ENCODE measurements at regions of chr1 and their contacts with region 1.

Region 1: DNA sequence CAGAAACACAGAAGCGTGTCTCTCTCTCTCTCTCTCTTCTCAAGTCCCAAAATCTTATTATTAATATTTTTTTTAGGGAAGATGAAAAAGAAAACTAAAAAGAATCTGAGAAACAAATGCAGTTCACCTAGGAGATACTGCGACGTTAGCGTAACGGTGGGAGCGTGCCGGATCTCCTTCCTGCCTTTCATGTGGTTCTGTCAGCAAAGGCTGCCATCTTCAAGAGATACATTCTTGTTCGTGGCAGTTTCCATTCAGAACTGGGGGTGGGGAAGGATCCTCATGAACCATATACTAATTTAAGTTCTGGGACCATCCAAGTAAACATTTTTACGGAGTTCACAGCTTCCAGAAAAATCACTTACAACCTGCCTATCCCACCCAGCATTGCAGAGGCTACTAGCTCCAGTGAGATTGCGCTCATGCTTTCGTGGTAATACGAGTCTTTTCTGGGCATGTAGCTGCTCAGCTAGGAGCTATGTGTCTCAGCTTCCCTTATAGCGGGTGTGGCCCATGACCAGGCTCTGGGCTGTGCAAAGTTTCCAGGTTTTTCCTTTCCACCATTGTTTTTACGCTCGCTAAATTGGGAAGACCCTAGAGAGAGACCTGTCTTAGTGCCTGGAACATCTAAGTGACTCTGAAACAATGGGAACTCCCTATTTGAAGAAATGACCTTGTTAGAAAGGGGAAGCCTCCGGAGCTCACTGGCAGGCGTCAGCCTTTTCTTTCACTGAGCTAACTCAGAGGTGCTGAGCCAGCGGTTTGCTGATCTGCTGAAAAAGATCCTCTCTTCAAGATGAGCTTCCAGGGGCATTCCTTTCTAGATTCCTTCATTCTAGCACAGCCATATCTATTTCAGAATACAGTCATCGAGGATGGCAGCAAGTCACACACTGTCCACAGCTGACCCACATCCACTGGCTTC is 17.3 kb downstream of the SLAMF1 start:
- DNase-seq: peak; percentile 83
- ATAC-seq: peak; percentile 22
- H3K4me3 Mint-ChIP-seq: peak overlapping the region; percentile 65
- H3K27ac Mint-ChIP-seq: peak overlapping the region; percentile 99
- H3K4me1 Mint-ChIP-seq: peaks cover 97% of the 10 kb centered on the region
- H3K27me3 Mint-ChIP-seq: no peaks in the 10 kb centered on the region

Region 2: GRCh38 chr1:160618763-160619274 is 10.7 kb before region 1 on chr1:
- CTCF ChIA-PET with region 1: interaction called, 22 read pairs
- POLR2A ChIA-PET with region 1: interaction called, 6 read pairs
- intact Hi-C with region 1: no loop called
- DNase-seq: peak; percentile 65
- ATAC-seq: no peak
- H3K4me3 Mint-ChIP-seq: no peak overlapping the region
- H3K27ac Mint-ChIP-seq: peak overlapping the region; percentile 71
- H3K4me1 Mint-ChIP-seq: peaks cover 60% of the 10 kb centered on the region
- H3K27me3 Mint-ChIP-seq: no peaks in the 10 kb centered on the region

Region 3: DNA sequence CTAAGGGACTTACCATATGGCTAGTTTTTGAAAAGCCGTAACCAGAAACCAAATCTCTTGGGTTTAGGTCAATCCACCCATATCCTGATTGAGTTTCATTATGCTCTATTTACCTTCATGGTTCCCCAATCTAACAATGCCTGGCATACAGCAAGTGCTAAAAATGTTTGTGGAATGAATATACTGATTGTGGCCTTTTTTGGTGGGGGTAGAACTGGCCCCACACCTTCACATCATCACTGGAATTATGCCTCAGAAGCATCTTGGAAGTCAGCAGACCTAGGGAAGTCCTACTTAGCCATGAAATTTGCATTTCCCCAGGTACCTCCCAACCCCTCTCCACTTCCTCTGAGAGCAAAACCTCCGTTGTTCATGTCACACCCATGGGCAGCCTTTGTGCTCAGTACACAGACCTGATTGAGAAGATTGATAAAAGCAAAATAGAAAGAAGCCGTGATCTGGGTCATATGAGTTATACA is 35.1 kb after region 1 on chr1:
- CTCF ChIA-PET with region 1: interaction called, 4 read pairs
- POLR2A ChIA-PET with region 1: no interaction called
- intact Hi-C with region 1: loop called in 1 of 2 experiments (anchors 1 kb)
- DNase-seq: peak; percentile 55
- ATAC-seq: peak; percentile 79
- H3K4me3 Mint-ChIP-seq: peak overlapping the region; percentile 40
- H3K27ac Mint-ChIP-seq: peak overlapping the region; percentile 89
- H3K4me1 Mint-ChIP-seq: peaks cover 70% of the 10 kb centered on the region
- H3K27me3 Mint-ChIP-seq: no peaks in the 10 kb centered on the region

Region 4: GRCh38 chr1:160795951-160796383 is 166.4 kb after region 1 on chr1 and contains the start of gene LY9:
- CTCF ChIA-PET with region 1: interaction called, 3 read pairs
- POLR2A ChIA-PET with region 1: interaction called, 5 read pairs
- intact Hi-C with region 1: loop called (anchors 2 to 5 kb)
- DNase-seq: peak; percentile 89
- ATAC-seq: peak; percentile 79
- H3K4me3 Mint-ChIP-seq: peak within 1 kb of the TSS; percentile 78
- H3K27ac Mint-ChIP-seq: peak within 1 kb of the TSS; percentile 95
- H3K4me1 Mint-ChIP-seq: peaks cover 61% of the 10 kb centered on the region
- H3K27me3 Mint-ChIP-seq: no peaks in the 10 kb centered on the region
- total RNA-seq, gene LY9: 10.0 to 11.0 TPM

Region 5: GRCh38 chr1:160981584-160982411 is 352.2 kb after region 1 on chr1:
- CTCF ChIA-PET with region 1: no interaction called
- POLR2A ChIA-PET with region 1: no interaction called
- intact Hi-C with region 1: no loop called
- DNase-seq: peak; percentile 35
- ATAC-seq: peak; percentile 68
- H3K4me3 Mint-ChIP-seq: peak overlapping the region; percentile 60
- H3K27ac Mint-ChIP-seq: no peak overlapping the region
- H3K4me1 Mint-ChIP-seq: peaks cover 3% of the 10 kb centered on the region
- H3K27me3 Mint-ChIP-seq: peaks cover 28% of the 10 kb centered on the region

Measured in activated CD4-positive, alpha-beta T cell treated with anti-CD3 and anti-CD28 coated beads for 36 hours (primary cell).